Activated B cell treated with CpG ODN at 0.5 μM for 24 hours (primary cell): ENCODE measurements at regions of chr11 and their contacts with region 1.

Region 1: DNA sequence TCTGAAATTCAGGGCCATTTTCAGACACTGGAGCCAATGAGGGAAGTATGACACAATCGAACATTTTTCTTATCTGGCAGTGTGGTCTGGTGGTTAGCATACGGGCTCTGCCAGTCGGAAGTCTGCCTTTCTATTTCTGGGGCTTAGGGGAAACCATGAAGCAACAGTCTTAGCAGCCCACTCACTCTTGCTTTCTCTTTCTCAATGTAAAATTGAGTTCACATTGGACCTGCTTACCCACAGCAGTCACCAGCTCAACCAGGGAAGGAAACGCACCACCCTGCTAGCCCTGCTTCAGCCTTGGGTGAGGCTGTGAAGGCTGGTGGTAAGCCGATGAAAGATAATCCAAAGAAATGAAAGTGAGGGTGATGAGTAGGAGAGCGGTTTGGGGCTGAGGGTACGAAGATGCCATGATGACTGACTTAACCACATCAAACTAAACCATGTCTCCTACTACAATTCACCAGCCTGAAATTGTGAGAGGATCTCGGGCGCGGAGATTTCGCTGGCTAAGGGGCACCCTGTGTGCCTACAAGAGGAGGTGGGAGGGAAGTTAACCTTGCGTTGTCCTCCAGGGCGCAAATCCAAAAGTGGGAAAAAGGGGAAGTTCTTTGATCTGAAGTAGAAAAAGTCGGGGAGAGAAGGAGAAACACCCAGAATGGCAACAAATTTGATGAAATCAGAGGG is 2.0 kb upstream of the LMO2 start:
- DNase-seq: peak; percentile 45
- ATAC-seq: peak; percentile 80
- H3K4me3 Mint-ChIP-seq: peak overlapping the region; percentile 92
- H3K27ac Mint-ChIP-seq: peak overlapping the region; percentile 94
- H3K4me1 Mint-ChIP-seq: peaks cover 70% of the 10 kb centered on the region
- H3K27me3 Mint-ChIP-seq: no peaks in the 10 kb centered on the region
- CTCF ChIP-seq: no peak

Region 2: GRCh38 chr11:33857933-33858371 is 35.9 kb before region 1 on chr11:
- CTCF ChIA-PET with region 1: interaction called, 8 read pairs
- POLR2A ChIA-PET with region 1: interaction called, 4 read pairs
- intact Hi-C with region 1: loop called (anchors 5 kb)
- DNase-seq: peak; percentile 65
- ATAC-seq: peak; percentile 98
- H3K4me3 Mint-ChIP-seq: no peak overlapping the region
- H3K27ac Mint-ChIP-seq: no peak overlapping the region
- H3K4me1 Mint-ChIP-seq: peaks cover 8% of the 10 kb centered on the region
- H3K27me3 Mint-ChIP-seq: no peaks in the 10 kb centered on the region
- CTCF ChIP-seq: peak; percentile 39

Region 3: GRCh38 chr11:33869481-33870422 is 24.1 kb before region 1 on chr11:
- CTCF ChIA-PET with region 1: interaction called, 3 read pairs
- POLR2A ChIA-PET with region 1: interaction called, 30 read pairs
- intact Hi-C with region 1: loop called (anchors 1 kb)
- DNase-seq: peak; percentile 57
- ATAC-seq: peak; percentile 72
- H3K4me3 Mint-ChIP-seq: peak overlapping the region; percentile 92
- H3K27ac Mint-ChIP-seq: peak overlapping the region; percentile 74
- H3K4me1 Mint-ChIP-seq: peaks cover 36% of the 10 kb centered on the region
- H3K27me3 Mint-ChIP-seq: no peaks in the 10 kb centered on the region
- CTCF ChIP-seq: no peak

Region 4: GRCh38 chr11:33907421-33907820 is 13.6 kb after region 1 on chr11:
- CTCF ChIA-PET with region 1: interaction called, 6 read pairs
- POLR2A ChIA-PET with region 1: interaction called, 10 read pairs
- intact Hi-C with region 1: loop called (anchors 1 kb)
- DNase-seq: no peak
- ATAC-seq: no peak
- H3K4me3 Mint-ChIP-seq: peak overlapping the region; percentile 32
- H3K27ac Mint-ChIP-seq: no peak overlapping the region
- H3K4me1 Mint-ChIP-seq: peaks cover 20% of the 10 kb centered on the region
- H3K27me3 Mint-ChIP-seq: no peaks in the 10 kb centered on the region
- CTCF ChIP-seq: no peak

Region 5: GRCh38 chr11:33912405-33913361 is 18.8 kb after region 1 on chr11:
- CTCF ChIA-PET with region 1: interaction called, 6 read pairs
- POLR2A ChIA-PET with region 1: interaction called, 10 read pairs
- intact Hi-C with region 1: loop called (anchors 1 kb)
- DNase-seq: peak; percentile 32
- ATAC-seq: peak; percentile 89
- H3K4me3 Mint-ChIP-seq: peak overlapping the region; percentile 59
- H3K27ac Mint-ChIP-seq: peak overlapping the region; percentile 90
- H3K4me1 Mint-ChIP-seq: peaks cover 19% of the 10 kb centered on the region
- H3K27me3 Mint-ChIP-seq: peaks cover 7% of the 10 kb centered on the region
- CTCF ChIP-seq: no peak

Region 6: GRCh38 chr11:33920838-33921613 is 27.2 kb after region 1 on chr11:
- CTCF ChIA-PET with region 1: no interaction called
- POLR2A ChIA-PET with region 1: interaction called, 11 read pairs
- intact Hi-C with region 1: loop called (anchors 1 kb)
- DNase-seq: peak; percentile 44
- ATAC-seq: peak; percentile 97
- H3K4me3 Mint-ChIP-seq: peak overlapping the region; percentile 47
- H3K27ac Mint-ChIP-seq: peak overlapping the region; percentile 70
- H3K4me1 Mint-ChIP-seq: peaks cover 26% of the 10 kb centered on the region
- H3K27me3 Mint-ChIP-seq: peaks cover 28% of the 10 kb centered on the region
- CTCF ChIP-seq: no peak

Region 7: GRCh38 chr11:33942954-33943353 is 49.1 kb after region 1 on chr11:
- CTCF ChIA-PET with region 1: no interaction called
- POLR2A ChIA-PET with region 1: no interaction called
- intact Hi-C with region 1: loop called (anchors 2 kb)
- DNase-seq: no peak
- ATAC-seq: peak; percentile 77
- H3K4me3 Mint-ChIP-seq: peak overlapping the region; percentile 29
- H3K27ac Mint-ChIP-seq: peak overlapping the region; percentile 32
- H3K4me1 Mint-ChIP-seq: peaks cover 40% of the 10 kb centered on the region
- H3K27me3 Mint-ChIP-seq: peaks cover 6% of the 10 kb centered on the region
- CTCF ChIP-seq: no peak

Region 8: DNA sequence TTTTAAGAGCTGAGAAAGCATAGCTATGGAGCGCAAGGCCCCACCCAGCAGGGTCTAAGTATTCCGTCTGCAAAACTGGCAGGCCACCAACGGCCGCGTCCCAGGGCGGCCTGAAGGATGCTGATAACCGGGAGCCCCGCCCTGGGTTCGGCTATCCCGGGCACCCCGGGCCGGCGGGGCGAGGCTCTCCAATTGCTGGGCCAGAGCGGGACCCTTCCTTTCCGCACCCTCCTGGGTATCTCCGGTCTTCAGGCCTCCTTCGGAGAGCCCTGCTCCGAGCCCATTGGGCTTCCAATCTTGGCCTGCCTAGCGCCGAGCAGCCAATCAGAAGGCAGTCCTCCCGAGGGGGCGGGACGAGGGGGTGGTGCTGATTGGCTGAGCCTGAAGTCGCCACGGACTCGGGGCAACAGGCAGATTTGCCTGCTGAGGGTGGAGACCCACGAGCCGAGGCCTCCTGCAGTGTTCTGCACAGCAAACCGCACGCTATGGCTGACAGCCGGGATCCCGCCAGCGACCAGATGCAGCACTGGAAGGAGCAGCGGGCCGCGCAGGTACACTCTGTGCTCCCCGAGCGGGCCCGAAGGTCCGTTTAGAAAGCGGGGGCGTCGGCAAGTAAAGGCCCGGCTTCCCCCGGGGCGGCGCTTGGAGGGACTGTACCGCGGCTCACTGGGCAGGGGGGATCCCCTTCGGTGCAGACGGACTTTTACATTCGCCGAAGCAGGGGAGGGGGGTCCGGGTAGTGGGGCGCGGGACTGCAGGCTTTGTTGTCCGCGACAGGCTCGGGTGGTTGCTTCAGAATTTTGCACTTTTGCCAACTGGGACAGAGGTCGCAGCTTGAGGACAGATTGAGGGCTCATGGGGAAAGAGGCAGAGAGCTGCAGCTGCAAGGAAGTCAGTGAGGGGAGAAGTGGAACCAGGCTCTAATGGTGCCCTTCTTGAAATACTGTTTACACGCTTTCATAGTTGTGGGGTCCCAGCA is 545.0 kb after region 1 on chr11 and contains the start of gene CAT:
- CTCF ChIA-PET with region 1: no interaction called
- POLR2A ChIA-PET with region 1: no interaction called
- intact Hi-C with region 1: no loop called
- DNase-seq: peak; percentile 96
- ATAC-seq: peak; percentile 90
- H3K4me3 Mint-ChIP-seq: peak within 1 kb of the TSS; percentile 99
- H3K27ac Mint-ChIP-seq: peak within 1 kb of the TSS; percentile 98
- H3K4me1 Mint-ChIP-seq: peaks cover 43% of the 10 kb centered on the region
- H3K27me3 Mint-ChIP-seq: no peaks in the 10 kb centered on the region
- CTCF ChIP-seq: no peak
- total RNA-seq, gene CAT: 79.8 and 81.2 TPM in 2 replicates